Activated CD4-positive, alpha-beta memory T cell treated with anti-CD3 and anti-CD28 coated beads for 36 hours (primary cell): ENCODE measurements at regions of chr15 and their contacts with region 1.

Region 1: DNA sequence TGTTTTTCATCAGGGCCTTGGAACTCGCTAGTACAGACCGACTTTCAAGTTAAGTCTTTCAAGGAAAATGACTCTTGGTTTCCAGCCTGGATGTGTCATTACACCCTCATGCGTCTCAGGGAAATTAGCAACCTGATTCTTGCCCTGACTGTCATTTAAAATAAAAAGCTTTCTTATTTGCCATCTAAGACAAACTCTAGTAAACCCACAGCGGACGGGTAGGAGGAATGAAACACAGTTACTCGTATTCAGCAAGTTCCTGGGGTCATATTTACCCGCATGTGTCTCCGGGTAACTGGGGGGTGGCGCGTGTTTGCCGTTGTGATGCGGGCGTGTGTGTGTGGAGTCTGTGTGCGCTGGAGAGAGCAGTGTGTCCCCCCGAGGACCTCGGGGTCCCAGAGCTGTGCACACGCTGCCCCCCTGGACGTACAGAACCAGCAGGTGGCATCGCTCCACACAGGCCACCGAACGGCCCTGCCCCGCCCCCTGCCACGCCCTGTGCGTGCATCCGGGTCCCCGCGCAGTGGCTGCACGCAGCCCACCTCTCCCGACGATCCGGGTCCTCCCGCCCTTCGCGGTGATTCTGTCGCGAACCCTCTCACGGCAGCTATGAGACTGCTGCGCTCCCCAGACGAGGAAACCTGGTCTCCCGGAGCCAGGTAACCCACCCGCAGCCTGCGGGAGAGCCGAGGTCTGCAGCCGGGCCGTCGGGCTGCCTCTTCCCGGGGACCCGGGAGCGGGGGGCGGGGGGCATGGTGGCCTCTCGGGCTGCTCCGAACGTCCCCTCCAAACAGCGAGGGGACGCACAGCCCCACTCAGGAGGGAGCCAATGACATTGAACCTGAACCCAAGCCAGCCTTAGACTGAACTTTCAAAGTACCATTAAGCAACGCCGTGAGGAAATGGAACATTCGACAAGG is 30.1 kb upstream of the ALDH1A3 start:
- DNase-seq: peak; percentile 59
- H3K4me3 Mint-ChIP-seq: peak overlapping the region; percentile 75
- H3K27ac Mint-ChIP-seq: no peak overlapping the region
- H3K4me1 Mint-ChIP-seq: peaks cover 8% of the 10 kb centered on the region
- H3K27me3 Mint-ChIP-seq: peaks cover 15% of the 10 kb centered on the region

Region 2: GRCh38 chr15:100821327-100821726 is 28.2 kb before region 1 on chr15:
- CTCF ChIA-PET with region 1: no interaction called
- POLR2A ChIA-PET with region 1: no interaction called
- intact Hi-C with region 1: loop called (anchors 1 kb)
- DNase-seq: no peak
- H3K4me3 Mint-ChIP-seq: no peak overlapping the region
- H3K27ac Mint-ChIP-seq: no peak overlapping the region
- H3K4me1 Mint-ChIP-seq: peaks cover 2% of the 10 kb centered on the region
- H3K27me3 Mint-ChIP-seq: peaks cover 48% of the 10 kb centered on the region